ENCODE measurements at regions of chr16 and their contacts with region 1.

Region 1: GRCh38 chr16:86585821-86586611 is 7.7 kb downstream of the FOXL1 start:
- DNase-seq: no peak
- ATAC-seq: no peak
- H3K4me3 ChIP-seq: no peak overlapping the region
- H3K27ac ChIP-seq: peak overlapping the region; percentile 36
- H3K4me1 ChIP-seq: no peaks in the 10 kb centered on the region
- H3K27me3 ChIP-seq: peaks cover 0 to 43% (median 1%) of the 10 kb centered on the region in 3 donors
- CTCF ChIP-seq: no peak

Region 2: DNA sequence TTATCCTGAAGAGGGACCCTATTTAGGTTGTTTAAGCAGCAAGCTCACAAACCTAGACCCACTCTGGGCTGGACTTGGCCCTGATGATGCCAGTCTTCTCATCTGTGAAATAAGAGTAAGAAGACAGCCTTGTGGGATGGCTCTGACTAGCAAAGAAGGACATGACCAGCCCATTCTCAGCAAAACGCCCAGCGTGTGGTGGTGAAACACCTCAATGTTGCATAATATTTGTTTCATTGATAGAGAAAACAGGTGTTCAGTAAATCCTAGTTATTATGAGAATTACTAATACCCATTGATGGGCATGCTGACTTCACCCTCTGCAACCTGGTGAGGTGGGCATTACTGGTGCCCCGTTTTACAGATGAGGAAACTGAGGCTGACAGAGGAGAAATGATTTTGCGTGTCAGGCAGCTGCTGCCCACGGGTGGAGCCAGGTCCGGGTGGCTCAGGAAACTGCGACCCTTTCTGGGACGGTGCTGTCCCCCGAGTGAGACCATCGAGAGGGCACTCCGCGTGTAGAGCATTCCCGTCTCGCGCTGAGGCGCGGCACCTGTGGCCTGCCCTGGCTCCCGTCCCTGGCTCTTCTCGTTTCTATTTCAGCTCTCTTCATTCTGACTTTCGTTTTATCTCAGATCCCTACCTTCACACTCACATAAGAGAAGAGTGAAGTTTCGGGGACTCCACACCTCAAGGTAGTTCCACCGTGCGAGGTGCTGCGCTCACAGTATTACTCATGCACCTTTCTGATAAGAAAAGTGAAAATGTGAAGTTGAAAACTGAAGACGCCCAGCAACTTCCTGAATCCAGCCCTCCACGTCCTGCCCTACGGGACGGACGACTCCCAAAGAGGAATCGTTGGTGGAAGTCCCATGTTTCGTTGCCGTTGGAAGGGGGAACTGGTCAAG is 638.5 kb before region 1 on chr16:
- intact Hi-C with region 1: no loop called
- DNase-seq: no peak
- ATAC-seq: no peak
- H3K4me3 ChIP-seq: peak overlapping the region; percentile 18
- H3K27ac ChIP-seq: no peak overlapping the region
- H3K4me1 ChIP-seq: no peaks in the 10 kb centered on the region
- H3K27me3 ChIP-seq: peaks cover 0 to 31% (median 0%) of the 10 kb centered on the region in 3 donors
- CTCF ChIP-seq: no peak

Region 3: DNA sequence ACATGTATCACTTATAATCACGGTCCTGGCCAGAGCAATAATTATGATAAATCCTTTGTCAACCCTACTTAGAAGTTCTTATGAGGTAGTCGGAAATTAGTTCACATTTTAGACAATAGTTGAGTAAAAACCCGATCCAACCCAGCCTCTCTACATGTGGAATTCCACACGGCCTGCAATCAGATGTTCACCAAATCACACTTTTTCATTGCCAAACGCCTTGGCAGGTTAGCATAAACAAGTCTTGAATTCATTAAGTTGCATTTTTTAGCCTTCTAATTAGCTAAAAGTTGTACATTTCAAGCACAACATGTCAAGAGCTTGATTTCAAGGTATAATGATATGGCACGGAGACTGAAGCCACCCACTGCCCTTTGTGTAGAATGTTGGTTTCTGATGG is 57.7 kb after region 1 on chr16:
- intact Hi-C with region 1: loop called in 1 of 2 experiments (anchors 2 kb)
- DNase-seq: no peak
- ATAC-seq: no peak
- H3K4me3 ChIP-seq: no peak overlapping the region
- H3K27ac ChIP-seq: no peak overlapping the region
- H3K4me1 ChIP-seq: no peaks in the 10 kb centered on the region
- H3K27me3 ChIP-seq: peaks cover 0 to 12% (median 8%) of the 10 kb centered on the region in 3 donors
- CTCF ChIP-seq: no peak

Region 4: DNA sequence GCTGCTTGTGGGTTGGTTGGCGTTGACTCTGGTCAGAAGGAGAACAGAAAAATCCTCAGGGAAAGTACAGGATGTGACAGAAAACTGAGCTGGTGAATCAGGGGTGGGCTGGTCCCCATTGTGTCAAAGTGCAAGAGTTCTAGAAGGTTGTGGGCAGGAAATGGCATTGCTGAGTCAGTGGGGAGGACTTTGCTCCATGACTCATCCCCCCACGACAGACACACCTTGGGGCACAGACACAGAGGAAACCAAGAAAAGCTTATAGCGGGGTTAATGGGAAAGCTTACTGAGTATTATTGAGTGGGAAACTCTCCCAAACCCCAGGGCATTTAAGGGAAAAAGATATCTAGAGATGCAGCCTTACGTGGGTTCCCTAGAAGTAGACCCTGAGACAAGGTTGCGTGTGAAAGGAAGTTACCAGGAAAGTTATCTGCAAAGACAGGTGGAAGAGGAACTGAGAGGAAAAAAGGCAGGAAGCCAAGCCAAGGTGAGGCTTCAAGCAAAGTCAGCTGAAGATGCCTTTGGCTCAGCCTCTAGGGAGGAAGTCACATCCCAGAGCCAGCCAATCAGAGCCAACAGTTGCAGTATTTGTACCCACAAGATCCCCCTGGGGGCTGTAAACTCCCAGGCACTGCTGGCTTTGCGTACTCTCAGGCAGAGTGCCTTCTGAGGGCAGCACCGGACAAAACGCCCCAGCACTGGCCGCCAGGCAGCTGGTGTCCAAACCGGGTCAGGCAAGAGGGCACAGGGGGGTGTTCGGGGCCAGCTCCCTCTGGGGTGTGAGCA is 78.7 kb after region 1 on chr16:
- intact Hi-C with region 1: no loop called
- DNase-seq: peak in 1 of 2 donors; percentile 64
- ATAC-seq: peak; percentile 47 to 72 (median 60)
- H3K4me3 ChIP-seq: no peak overlapping the region
- H3K27ac ChIP-seq: no peak overlapping the region
- H3K4me1 ChIP-seq: peaks cover 15% of the 10 kb centered on the region
- H3K27me3 ChIP-seq: peaks cover 0 to 14% (median 0%) of the 10 kb centered on the region in 3 donors
- CTCF ChIP-seq: no peak

Region 5: GRCh38 chr16:86951831-86952598 is 366.0 kb after region 1 on chr16:
- intact Hi-C with region 1: no loop called
- DNase-seq: peak; percentile 51 to 55
- ATAC-seq: peak in 1 of 4 donors; percentile 35
- H3K4me3 ChIP-seq: no peak overlapping the region
- H3K27ac ChIP-seq: no peak overlapping the region
- H3K4me1 ChIP-seq: no peaks in the 10 kb centered on the region
- H3K27me3 ChIP-seq: peaks cover 0 to 22% (median 8%) of the 10 kb centered on the region in 3 donors
- CTCF ChIP-seq: no peak